Cardiac septum (tissue), 1 donor: ENCODE measurements at regions of chr11 and their contacts with region 1.

Region 1: GRCh38 chr11:82996966-82997606 is 74.6 kb downstream of the RAB30 start:
- DNase-seq: no peak

Region 2: DNA sequence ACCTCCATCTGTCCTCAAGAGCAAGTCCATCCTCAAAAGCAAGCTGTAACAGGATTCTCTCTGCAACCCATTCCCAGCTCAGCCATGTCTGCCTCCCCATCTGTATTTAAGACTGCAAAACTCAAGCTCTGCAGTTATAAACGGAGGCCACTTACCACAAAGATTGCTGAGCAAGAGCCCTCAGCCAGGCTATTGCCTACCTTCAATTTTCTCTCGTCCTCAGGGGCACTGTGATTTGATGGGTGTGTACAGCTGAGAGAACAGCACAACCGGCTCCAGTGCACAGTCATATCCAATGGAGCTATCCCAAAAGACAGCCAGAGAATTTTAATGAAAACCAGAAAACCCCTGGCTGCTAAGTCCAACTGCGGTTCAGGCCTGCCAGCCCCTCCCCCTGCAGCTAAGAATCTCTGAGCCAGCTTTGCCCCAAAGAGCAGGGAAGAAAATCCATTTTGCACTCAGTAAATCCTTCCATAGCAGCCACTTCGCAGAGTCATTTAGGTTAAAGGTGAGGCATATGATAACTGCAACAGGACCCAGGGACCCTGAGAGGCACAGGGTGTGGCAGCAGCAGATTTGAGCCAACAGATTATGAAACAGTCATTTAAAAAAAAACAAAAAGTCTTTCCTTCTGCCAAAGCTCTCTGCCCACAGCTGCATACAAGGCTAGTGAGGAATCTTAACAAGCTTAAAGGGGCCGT is 37.0 kb after region 1 on chr11:
- intact Hi-C with region 1: loop called (anchors 5 kb)
- DNase-seq: no peak